H1 (cell line): ENCODE measurements at regions of chr2 and their contacts with region 1.

Region 1: DNA sequence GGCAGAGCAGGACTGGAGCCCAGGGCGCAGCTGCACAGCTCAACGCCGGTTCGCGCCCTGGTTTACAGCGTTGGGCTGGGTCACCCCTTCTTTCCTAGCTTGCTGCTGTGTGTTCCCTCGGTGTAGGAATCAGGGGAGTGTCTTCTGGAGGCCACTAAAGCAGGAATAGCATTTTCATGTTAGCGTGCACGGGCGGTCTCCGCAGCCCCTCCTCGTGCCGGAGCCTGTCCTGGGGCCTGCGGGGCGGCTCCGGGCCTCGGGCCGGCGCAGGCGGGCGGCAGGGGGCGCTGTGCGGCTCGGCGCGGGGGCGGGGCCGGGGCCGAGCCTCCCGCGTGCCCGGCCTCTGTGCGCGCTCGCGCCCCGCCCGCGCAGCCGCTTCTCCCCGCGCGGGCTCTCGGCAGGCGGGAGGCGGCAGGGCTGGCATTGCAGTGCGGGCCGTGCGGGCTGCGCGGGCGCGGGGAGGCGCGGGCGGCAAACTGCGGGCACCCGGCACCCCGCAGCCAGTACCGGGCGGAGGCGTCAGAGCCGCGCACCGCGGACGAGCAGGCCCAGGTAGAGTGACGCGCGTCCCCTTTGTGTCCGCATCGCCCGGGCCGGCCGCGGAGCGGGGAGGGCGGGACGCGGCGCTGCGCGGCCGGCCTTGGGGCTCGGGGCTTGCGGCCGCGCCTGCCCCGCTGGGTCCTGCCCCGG is at the start of gene RNF144A:
- DNase-seq: peak in 1 of 2 experiments; percentile 87
- H3K4me3 ChIP-seq: peak within 1 kb of the TSS; percentile 49 to 90 (median 60)
- H3K27ac ChIP-seq: no peak within 1 kb of the TSS; the same call in 1 of the 2 replicates
- H3K4me1 ChIP-seq: peaks cover 5 to 17% (median 9%) of the 10 kb centered on the region in 4 experiments
- H3K27me3 ChIP-seq: peaks cover 0 to 12% (median under 1%) of the 10 kb centered on the region in 4 experiments; a peak in 2 of 7 replicates
- CTCF ChIP-seq: peak; percentile 43 to 62 (median 53)
- EP300 ChIP-seq: no peak
- POLR2A ChIP-seq: no peak; a peak in 2 of 3 replicates
- RAD21 ChIP-seq: peak in 1 of 2 experiments; percentile 4; a peak in 1 of 4 replicates
- total RNA-seq, gene RNF144A: 15.0 and 15.1 TPM in 2 replicates

Region 2: DNA sequence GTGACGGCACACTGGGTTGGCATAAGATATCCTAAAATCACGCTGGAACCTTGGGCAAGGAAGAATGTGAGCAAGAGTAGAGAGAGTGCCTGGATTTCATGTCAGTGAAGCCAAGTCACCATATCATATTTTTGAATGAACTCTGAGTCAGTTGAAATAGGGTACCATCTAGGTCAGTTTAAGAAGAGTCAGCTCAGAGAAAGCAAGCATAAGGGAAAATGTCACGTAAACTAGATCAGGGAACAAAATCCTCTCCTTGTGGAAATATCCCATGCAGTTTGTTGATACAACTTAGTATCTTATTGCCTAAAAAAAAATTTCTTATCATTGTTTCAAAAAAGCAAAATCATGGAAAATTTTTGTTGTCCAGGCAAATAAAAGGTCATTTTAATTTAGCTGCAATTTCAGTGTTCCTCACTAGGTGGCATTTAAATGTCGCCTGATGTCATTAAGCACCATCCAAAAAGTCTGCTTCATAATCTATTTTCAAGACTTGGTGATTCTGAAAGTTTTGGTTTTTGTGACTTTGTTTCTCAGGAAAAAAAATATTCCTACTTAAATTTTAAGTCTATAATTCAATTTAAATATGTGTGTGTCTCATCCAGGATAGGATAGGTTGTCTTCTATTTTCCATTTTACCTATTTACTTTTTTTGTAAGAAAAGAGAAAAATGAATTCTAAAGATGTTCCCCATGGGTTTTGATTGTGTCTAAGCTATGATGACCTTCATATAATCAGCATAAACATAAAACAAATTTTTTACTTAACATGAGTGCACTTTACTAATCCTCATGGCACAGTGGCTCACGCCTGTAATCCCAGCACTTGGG is 20.1 kb before region 1 on chr2:
- CTCF ChIA-PET with region 1: interaction called, 94 read pairs
- POLR2A ChIA-PET with region 1: no interaction called
- DNase-seq: no peak
- H3K4me3 ChIP-seq: no peak overlapping the region
- H3K27ac ChIP-seq: no peak overlapping the region
- H3K4me1 ChIP-seq: no peaks in the 10 kb centered on the region
- H3K27me3 ChIP-seq: no peaks in the 10 kb centered on the region
- CTCF ChIP-seq: peak in 2 of 3 experiments; percentile 39 to 52; a peak in 2 of 4 replicates
- EP300 ChIP-seq: no peak
- POLR2A ChIP-seq: no peak
- RAD21 ChIP-seq: peak; percentile 63 to 66

Region 3: GRCh38 chr2:6906165-6906741 is 11.0 kb before region 1 on chr2:
- CTCF ChIA-PET with region 1: interaction called, 18 read pairs
- POLR2A ChIA-PET with region 1: interaction called, 3 read pairs
- DNase-seq: no peak
- H3K4me3 ChIP-seq: no peak overlapping the region
- H3K27ac ChIP-seq: no peak overlapping the region
- H3K4me1 ChIP-seq: no peaks in the 10 kb centered on the region
- H3K27me3 ChIP-seq: no peaks in the 10 kb centered on the region
- CTCF ChIP-seq: no peak
- EP300 ChIP-seq: no peak
- POLR2A ChIP-seq: no peak
- RAD21 ChIP-seq: no peak